Ovary (tissue), 10 donors: ENCODE measurements at regions of chr19 and their contacts with region 1.

Region 1: GRCh38 chr19:45423589-45424190 is at the start of gene ERCC1:
- DNase-seq: peak in 4 of 5 donors; percentile 96 to 98 (median 96)
- H3K4me3 ChIP-seq: peak within 1 kb of the TSS; percentile 63
- H3K27ac ChIP-seq: peak within 1 kb of the TSS; percentile 42 to 87
- H3K4me1 ChIP-seq: peaks cover 10% of the 10 kb centered on the region
- H3K27me3 ChIP-seq: no peaks in the 10 kb centered on the region
- CTCF ChIP-seq: no peak
- EP300 ChIP-seq: no peak
- POLR2A ChIP-seq: peak; percentile 69
- total RNA-seq, gene ERCC1: 70.7 to 98.6 (median 83.9) TPM

Region 2: GRCh38 chr19:45385392-45386221 is 38.1 kb before region 1 on chr19:
- intact Hi-C with region 1: no loop called
- DNase-seq: no peak
- H3K4me3 ChIP-seq: no peak overlapping the region
- H3K27ac ChIP-seq: no peak overlapping the region
- H3K4me1 ChIP-seq: no peaks in the 10 kb centered on the region
- H3K27me3 ChIP-seq: no peaks in the 10 kb centered on the region
- CTCF ChIP-seq: no peak
- EP300 ChIP-seq: no peak
- POLR2A ChIP-seq: no peak

Region 3: DNA sequence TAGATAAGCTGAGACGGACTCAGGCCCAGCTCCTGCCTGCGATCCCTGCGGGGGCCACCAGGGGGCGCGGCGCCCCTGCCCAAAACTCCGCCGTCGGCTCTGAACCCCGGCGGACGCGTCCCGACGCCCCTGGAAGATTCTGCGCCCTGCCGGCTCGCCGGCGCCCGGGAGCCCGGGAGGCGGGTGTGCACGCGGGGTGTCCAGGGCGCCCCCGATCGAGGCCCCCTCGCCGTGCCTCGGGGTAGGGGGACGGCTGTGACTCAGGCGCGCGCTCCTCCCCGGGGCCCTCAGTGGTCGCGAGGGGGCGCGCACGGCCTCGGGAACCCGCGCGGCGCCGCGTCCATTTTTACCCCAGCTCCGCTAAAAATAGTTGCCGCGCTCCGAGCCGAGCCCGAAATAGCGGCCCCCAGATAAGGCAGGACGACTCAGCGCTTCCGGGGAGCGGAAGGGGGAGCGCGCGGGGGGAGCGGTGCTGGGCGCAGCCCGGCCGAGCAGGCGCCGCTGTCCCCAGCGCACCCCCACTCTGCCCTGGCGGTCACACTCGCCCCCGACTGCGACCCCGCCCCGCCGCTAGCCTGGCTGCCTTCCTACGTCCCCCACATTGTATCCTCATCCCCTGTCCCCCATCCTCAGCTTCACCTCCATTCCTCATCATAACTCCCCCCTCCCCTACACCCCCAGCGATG is 16.0 kb after region 1 on chr19:
- intact Hi-C with region 1: loop called in 1 of 4 experiments (anchors 2 kb)
- DNase-seq: peak; percentile 93 to 95 (median 93)
- H3K4me3 ChIP-seq: peak overlapping the region; percentile 65
- H3K27ac ChIP-seq: peak overlapping the region; percentile 96 to 98
- H3K4me1 ChIP-seq: peaks cover 5% of the 10 kb centered on the region
- H3K27me3 ChIP-seq: no peaks in the 10 kb centered on the region
- CTCF ChIP-seq: peak; percentile 99 to 100 (median 100)
- EP300 ChIP-seq: peak; percentile 33
- POLR2A ChIP-seq: peak; percentile 43

Region 4: DNA sequence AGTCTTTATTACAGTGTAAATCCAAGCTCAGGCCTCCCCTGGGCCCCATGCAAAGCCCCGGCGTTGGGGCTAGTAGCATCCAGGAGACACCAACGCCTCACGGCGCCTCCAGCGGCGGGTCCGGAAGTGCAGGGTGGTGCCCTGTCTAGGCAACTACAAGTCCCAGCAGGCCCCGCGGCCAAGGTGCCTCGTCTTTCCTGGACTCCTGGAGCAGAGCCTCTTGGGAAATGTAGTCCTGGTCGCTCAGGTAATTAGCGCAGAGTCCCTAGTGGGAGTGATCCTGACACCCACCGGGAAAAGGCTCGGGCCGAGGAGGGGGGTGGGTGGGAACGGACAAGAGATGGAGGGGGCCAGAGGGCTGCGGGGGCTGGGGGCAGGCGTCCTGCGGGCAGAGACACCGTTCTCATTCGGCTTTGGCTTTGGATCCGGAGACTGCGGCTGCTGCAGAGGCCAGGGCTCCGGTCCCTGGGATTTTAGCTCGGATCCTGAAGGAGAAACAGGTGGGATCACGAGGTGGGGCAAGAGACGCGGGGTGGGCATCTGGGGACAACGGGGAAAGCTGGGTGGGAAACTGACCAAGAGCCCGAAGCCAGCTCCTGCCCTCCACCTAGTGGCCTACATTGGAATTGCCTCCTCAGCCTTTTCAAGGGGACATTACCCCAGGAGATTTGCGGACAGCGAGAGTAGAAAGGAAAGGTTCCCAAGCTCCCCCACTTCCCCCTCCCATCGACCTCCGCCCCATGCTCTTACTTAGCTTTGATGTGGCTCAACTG is 61.8 kb after region 1 on chr19:
- intact Hi-C with region 1: loop called in 1 of 4 experiments (anchors 5 kb)
- DNase-seq: peak; percentile 96 to 98 (median 97)
- H3K4me3 ChIP-seq: peak overlapping the region; percentile 56
- H3K27ac ChIP-seq: peak overlapping the region; percentile 42 to 67
- H3K4me1 ChIP-seq: no peaks in the 10 kb centered on the region
- H3K27me3 ChIP-seq: no peaks in the 10 kb centered on the region
- CTCF ChIP-seq: peak; percentile 55 to 89 (median 81)
- EP300 ChIP-seq: no peak
- POLR2A ChIP-seq: no peak

Region 5: DNA sequence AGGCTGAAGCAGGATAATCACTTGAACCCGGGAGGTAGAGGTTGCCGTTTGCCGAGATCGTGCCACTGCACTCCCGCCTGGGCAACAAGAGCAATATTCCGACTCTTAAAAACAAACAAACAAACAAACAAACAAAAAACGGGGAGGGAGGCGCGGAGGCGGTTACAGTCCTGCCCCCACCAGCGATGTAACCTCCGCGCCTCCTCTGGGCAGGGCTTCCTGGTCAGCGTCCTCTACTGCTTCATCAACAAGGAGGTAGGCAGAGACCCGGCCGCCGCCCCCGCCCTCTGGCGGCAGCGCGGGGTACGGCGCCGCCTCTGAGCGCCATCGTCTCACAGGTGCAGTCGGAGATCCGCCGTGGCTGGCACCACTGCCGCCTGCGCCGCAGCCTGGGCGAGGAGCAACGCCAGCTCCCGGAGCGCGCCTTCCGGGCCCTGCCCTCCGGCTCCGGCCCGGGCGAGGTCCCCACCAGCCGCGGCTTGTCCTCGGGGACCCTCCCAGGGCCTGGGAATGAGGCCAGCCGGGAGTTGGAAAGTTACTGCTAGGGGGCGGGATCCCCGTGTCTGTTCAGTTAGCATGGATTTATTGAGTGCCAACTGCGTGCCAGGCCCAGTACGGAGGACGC is 257.8 kb after region 1 on chr19:
- intact Hi-C with region 1: loop called in 1 of 4 experiments (anchors 10 kb)
- DNase-seq: peak; percentile 71 to 85 (median 81)
- H3K4me3 ChIP-seq: peak overlapping the region; percentile 32
- H3K27ac ChIP-seq: peak overlapping the region; percentile 7 to 19
- H3K4me1 ChIP-seq: peaks cover 3% of the 10 kb centered on the region
- H3K27me3 ChIP-seq: peaks cover 7% of the 10 kb centered on the region
- CTCF ChIP-seq: peak; percentile 92 to 95 (median 93)
- EP300 ChIP-seq: no peak
- POLR2A ChIP-seq: no peak